Aorta (tissue), 5 donors: ENCODE measurements at regions of chr9 and their contacts with region 1.

Region 1: GRCh38 chr9:13478160-13478559 is 198.7 kb upstream of the MPDZ start:
- DNase-seq: no peak
- ATAC-seq: no peak
- H3K4me3 ChIP-seq: no peak overlapping the region
- H3K27ac ChIP-seq: no peak overlapping the region
- H3K4me1 ChIP-seq: no peaks in the 10 kb centered on the region
- H3K27me3 ChIP-seq: no peaks in the 10 kb centered on the region

Region 2: DNA sequence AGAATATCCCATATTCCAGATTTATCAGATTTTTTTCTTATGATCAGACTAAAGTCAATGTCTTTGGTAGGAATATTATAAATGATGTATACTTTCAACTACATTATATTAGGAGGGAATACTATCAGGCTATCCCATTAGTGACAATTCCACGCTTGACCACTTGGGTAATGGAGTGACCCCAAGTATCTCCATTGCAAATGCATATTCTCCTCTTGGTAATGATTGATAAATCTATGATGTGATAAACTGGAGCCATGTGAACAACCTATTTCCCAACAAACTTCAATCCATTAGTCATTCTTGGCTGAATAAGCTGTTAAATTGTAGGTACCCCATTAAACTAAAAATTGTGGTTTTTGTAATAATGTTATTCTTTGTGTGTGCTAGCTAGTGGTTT is 186.4 kb before region 1 on chr9:
- intact Hi-C with region 1: no loop called
- DNase-seq: no peak
- ATAC-seq: no peak
- H3K4me3 ChIP-seq: no peak overlapping the region
- H3K27ac ChIP-seq: no peak overlapping the region
- H3K4me1 ChIP-seq: no peaks in the 10 kb centered on the region
- H3K27me3 ChIP-seq: no peaks in the 10 kb centered on the region

Region 3: DNA sequence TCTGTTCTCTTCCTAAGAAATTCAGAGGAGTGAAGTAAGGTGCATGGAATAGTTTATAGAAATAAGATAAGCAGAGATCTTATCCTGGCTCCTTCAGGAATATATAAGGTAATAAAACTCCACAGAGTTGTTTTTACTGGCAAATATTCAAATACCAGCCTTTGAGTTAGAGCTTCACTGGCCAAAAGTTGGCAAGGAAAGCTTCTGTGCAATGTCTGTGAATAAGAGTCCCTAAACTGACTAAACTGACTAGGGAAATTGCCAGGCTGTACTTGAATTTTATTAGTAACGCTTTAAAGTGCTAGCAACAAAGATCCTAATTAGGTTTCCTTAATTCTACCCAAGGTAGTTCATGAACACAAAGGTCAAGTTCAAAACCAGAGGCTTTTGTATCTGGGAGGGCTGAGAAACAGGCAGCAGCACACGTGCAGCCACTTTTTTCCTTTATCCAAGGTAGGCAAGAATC is 67.6 kb before region 1 on chr9:
- intact Hi-C with region 1: no loop called
- DNase-seq: no peak
- ATAC-seq: no peak
- H3K4me3 ChIP-seq: no peak overlapping the region
- H3K27ac ChIP-seq: no peak overlapping the region
- H3K4me1 ChIP-seq: peaks cover 0 to 2% of the 10 kb centered on the region in 2 donors
- H3K27me3 ChIP-seq: no peaks in the 10 kb centered on the region

Region 4: GRCh38 chr9:13674926-13675637 is 196.9 kb after region 1 on chr9:
- intact Hi-C with region 1: loop called in 1 of 2 experiments (anchors 10 kb)
- DNase-seq: no peak
- ATAC-seq: no peak
- H3K4me3 ChIP-seq: no peak overlapping the region
- H3K27ac ChIP-seq: no peak overlapping the region
- H3K4me1 ChIP-seq: no peaks in the 10 kb centered on the region
- H3K27me3 ChIP-seq: no peaks in the 10 kb centered on the region

Region 5: GRCh38 chr9:14372437-14373335 is 894.5 kb after region 1 on chr9:
- intact Hi-C with region 1: no loop called
- DNase-seq: no peak
- ATAC-seq: peak; percentile 74
- H3K4me3 ChIP-seq: no peak overlapping the region
- H3K27ac ChIP-seq: no peak overlapping the region
- H3K4me1 ChIP-seq: peaks cover 2 to 4% of the 10 kb centered on the region in 2 donors
- H3K27me3 ChIP-seq: no peaks in the 10 kb centered on the region